Activated naive CD4-positive, alpha-beta T cell treated with anti-CD3 and anti-CD28 coated beads for 36 hours (primary cell): ENCODE measurements at regions of chr3 and their contacts with region 1.

Region 1: GRCh38 chr3:149771652-149772271 is 19.5 kb upstream of the COMMD2 start:
- DNase-seq: peak; percentile 56
- H3K4me3 Mint-ChIP-seq: no peak overlapping the region
- H3K27ac Mint-ChIP-seq: no peak overlapping the region
- H3K4me1 Mint-ChIP-seq: no peaks in the 10 kb centered on the region
- H3K27me3 Mint-ChIP-seq: peaks cover 13% of the 10 kb centered on the region

Region 2: GRCh38 chr3:149494022-149494758 is 277.6 kb before region 1 on chr3:
- CTCF ChIA-PET with region 1: interaction called, 6 read pairs
- intact Hi-C with region 1: loop called (anchors 5 kb)
- DNase-seq: peak; percentile 60
- H3K4me3 Mint-ChIP-seq: no peak overlapping the region
- H3K27ac Mint-ChIP-seq: no peak overlapping the region
- H3K4me1 Mint-ChIP-seq: no peaks in the 10 kb centered on the region
- H3K27me3 Mint-ChIP-seq: peaks cover 21% of the 10 kb centered on the region

Region 3: GRCh38 chr3:149512209-149512782 is 259.5 kb before region 1 on chr3:
- CTCF ChIA-PET with region 1: interaction called, 8 read pairs
- intact Hi-C with region 1: loop called (anchors 1 kb)
- DNase-seq: peak; percentile 59
- H3K4me3 Mint-ChIP-seq: no peak overlapping the region
- H3K27ac Mint-ChIP-seq: no peak overlapping the region
- H3K4me1 Mint-ChIP-seq: peaks cover 14% of the 10 kb centered on the region
- H3K27me3 Mint-ChIP-seq: peaks cover 15% of the 10 kb centered on the region

Region 4: DNA sequence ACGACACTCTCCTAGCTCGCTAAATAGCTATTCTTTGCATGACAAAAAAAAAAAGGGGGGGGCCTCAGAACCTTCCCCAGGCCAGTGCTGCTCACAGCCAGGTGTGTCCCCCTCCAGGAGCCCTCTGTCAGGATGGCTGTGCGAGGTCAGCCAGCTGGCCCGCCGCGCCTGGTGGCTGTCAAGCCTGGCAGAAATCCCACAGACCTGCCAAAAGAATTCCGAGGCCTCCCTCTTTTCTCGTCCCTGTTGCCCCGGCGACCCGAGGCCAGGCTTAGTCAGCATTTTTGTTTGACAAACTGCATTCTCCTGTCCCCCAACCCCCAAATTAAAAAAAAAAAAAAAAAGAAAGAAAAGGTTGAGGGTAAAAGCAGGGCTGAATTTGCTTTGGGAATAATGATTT is 235.3 kb before region 1 on chr3:
- CTCF ChIA-PET with region 1: interaction called, 22 read pairs
- intact Hi-C with region 1: loop called (anchors 2 kb)
- DNase-seq: no peak
- H3K4me3 Mint-ChIP-seq: no peak overlapping the region
- H3K27ac Mint-ChIP-seq: no peak overlapping the region
- H3K4me1 Mint-ChIP-seq: peaks cover 3% of the 10 kb centered on the region
- H3K27me3 Mint-ChIP-seq: peaks cover 7% of the 10 kb centered on the region

Region 5: GRCh38 chr3:149575961-149576564 is 195.7 kb before region 1 on chr3:
- CTCF ChIA-PET with region 1: interaction called, 20 read pairs
- intact Hi-C with region 1: no loop called
- DNase-seq: peak; percentile 7
- H3K4me3 Mint-ChIP-seq: no peak overlapping the region
- H3K27ac Mint-ChIP-seq: no peak overlapping the region
- H3K4me1 Mint-ChIP-seq: peaks cover 18% of the 10 kb centered on the region
- H3K27me3 Mint-ChIP-seq: peaks cover 16% of the 10 kb centered on the region